ENCODE measurements at regions of chr4 and their contacts with region 1.

Region 1: DNA sequence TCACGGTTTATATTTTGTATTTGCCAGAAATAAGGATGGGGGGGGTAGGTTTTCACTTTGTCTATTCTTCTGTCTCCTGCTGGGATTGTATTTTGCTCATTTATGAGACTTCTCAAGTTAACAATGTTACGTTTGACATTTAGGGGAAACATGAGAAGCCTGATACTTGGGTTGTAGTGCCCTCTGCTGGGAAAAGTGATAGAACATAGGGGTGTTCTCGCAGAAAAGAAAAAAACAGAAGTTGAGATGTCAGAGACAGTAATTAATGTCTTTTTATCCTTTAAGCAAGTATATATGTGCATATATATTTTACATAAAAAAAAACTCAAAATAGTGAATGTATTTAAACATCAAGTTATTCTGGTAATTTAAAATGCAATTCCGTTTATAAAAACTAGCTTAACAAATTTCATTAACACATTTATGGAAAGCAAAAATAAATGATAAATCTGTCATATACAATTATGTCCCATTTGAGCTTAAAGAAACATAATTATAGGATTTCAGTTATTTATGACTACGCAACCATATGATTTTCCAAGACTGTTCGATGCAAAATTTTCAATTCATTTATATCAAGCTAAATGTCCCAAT is 46.0 kb upstream of the TMPRSS11F start:
- DNase-seq: peak; percentile 64
- H3K4me3 ChIP-seq: no peak overlapping the region
- H3K27ac ChIP-seq: no peak overlapping the region
- H3K4me1 ChIP-seq: no peaks in the 10 kb centered on the region
- CTCF ChIP-seq: peak; percentile 92

Region 2: GRCh38 chr4:67988991-67989390 is 186.7 kb before region 1 on chr4:
- CTCF ChIA-PET with region 1: no interaction called
- POLR2A ChIA-PET with region 1: no interaction called
- intact Hi-C with region 1: loop called (anchors 1 kb)
- DNase-seq: no peak
- H3K4me3 ChIP-seq: no peak overlapping the region
- H3K27ac ChIP-seq: no peak overlapping the region
- H3K4me1 ChIP-seq: no peaks in the 10 kb centered on the region
- CTCF ChIP-seq: no peak